Ovary (tissue), 10 donors: ENCODE measurements at regions of chr22 and their contacts with region 1.

Region 1: GRCh38 chr22:49712195-49712791 is 115.4 kb downstream of the BRD1 start:
- DNase-seq: no peak
- H3K4me3 ChIP-seq: no peak overlapping the region
- H3K27ac ChIP-seq: no peak overlapping the region
- H3K4me1 ChIP-seq: no peaks in the 10 kb centered on the region
- H3K27me3 ChIP-seq: no peaks in the 10 kb centered on the region
- CTCF ChIP-seq: no peak
- EP300 ChIP-seq: no peak
- POLR2A ChIP-seq: no peak

Region 2: GRCh38 chr22:49657275-49657975 is 54.9 kb before region 1 on chr22:
- intact Hi-C with region 1: loop called in 1 of 4 experiments (anchors 10 kb)
- DNase-seq: peak in 2 of 5 donors; percentile 37 to 55
- H3K4me3 ChIP-seq: peak overlapping the region; percentile 22
- H3K27ac ChIP-seq: no peak overlapping the region
- H3K4me1 ChIP-seq: no peaks in the 10 kb centered on the region
- H3K27me3 ChIP-seq: no peaks in the 10 kb centered on the region
- CTCF ChIP-seq: no peak
- EP300 ChIP-seq: no peak
- POLR2A ChIP-seq: no peak